ENCODE measurements at regions of chr6 and their contacts with region 1.

Region 1: GRCh38 chr6:160013987-160014868 is 45.3 kb downstream of the IGF2R start:
- DNase-seq: peak; percentile 16
- ATAC-seq: peak; percentile 86
- H3K4me3 ChIP-seq: no peak overlapping the region
- H3K27ac ChIP-seq: no peak overlapping the region
- H3K4me1 ChIP-seq: peaks cover 19% of the 10 kb centered on the region
- H3K27me3 ChIP-seq: no peaks in the 10 kb centered on the region
- CTCF ChIP-seq: no peak
- EP300 ChIP-seq: no peak
- POLR2A ChIP-seq: no peak
- RAD21 ChIP-seq: no peak

Region 2: GRCh38 chr6:160002882-160003281 is 11.3 kb before region 1 on chr6:
- CTCF ChIA-PET with region 1: no interaction called
- POLR2A ChIA-PET with region 1: no interaction called
- in situ Hi-C with region 1: no loop called
- intact Hi-C with region 1: loop called (anchors 2 kb)
- DNase-seq: no peak
- ATAC-seq: no peak
- H3K4me3 ChIP-seq: no peak overlapping the region
- H3K27ac ChIP-seq: no peak overlapping the region
- H3K4me1 ChIP-seq: peaks cover 22% of the 10 kb centered on the region
- H3K27me3 ChIP-seq: no peaks in the 10 kb centered on the region
- CTCF ChIP-seq: no peak
- EP300 ChIP-seq: no peak
- POLR2A ChIP-seq: no peak
- RAD21 ChIP-seq: no peak

Region 3: DNA sequence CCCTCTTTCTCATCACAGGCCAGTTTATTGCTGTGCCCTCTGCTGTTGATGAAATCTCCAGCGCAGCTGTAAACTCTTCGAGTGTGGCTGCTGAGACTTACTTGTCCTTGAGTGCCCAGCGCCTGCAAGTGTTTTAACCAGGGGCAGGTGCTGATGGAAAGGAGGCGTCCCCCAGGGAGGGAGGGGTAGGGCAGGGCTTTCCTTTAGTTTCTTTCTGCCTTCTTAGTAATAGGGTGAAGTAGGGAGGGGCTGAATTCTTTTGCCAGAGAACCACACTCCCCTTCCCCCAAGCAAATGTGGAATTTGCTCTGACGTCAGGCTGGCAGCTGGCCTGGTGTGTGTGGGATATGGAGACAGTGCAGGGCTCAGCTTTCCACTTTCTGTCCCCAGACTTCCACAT is 15.9 kb after region 1 on chr6:
- CTCF ChIA-PET with region 1: no interaction called
- POLR2A ChIA-PET with region 1: no interaction called
- in situ Hi-C with region 1: no loop called
- intact Hi-C with region 1: no loop called
- DNase-seq: no peak
- ATAC-seq: peak; percentile 24; the same call in 1 of the 3 replicates
- H3K4me3 ChIP-seq: no peak overlapping the region
- H3K27ac ChIP-seq: no peak overlapping the region
- H3K4me1 ChIP-seq: no peaks in the 10 kb centered on the region
- H3K27me3 ChIP-seq: no peaks in the 10 kb centered on the region
- CTCF ChIP-seq: no peak
- EP300 ChIP-seq: no peak
- POLR2A ChIP-seq: no peak
- RAD21 ChIP-seq: no peak

Region 4: GRCh38 chr6:160137989-160138835 is 124.0 kb after region 1 on chr6:
- CTCF ChIA-PET with region 1: no interaction called
- POLR2A ChIA-PET with region 1: no interaction called
- in situ Hi-C with region 1: no loop called
- intact Hi-C with region 1: no loop called
- DNase-seq: peak; percentile 57
- ATAC-seq: peak; percentile 9
- H3K4me3 ChIP-seq: peak overlapping the region in 1 of 3 experiments; percentile 40; a peak in 1 of 6 replicates
- H3K27ac ChIP-seq: peak overlapping the region; percentile 60
- H3K4me1 ChIP-seq: peaks cover 66% of the 10 kb centered on the region
- H3K27me3 ChIP-seq: no peaks in the 10 kb centered on the region
- CTCF ChIP-seq: peak; percentile 82
- EP300 ChIP-seq: no peak
- POLR2A ChIP-seq: no peak
- RAD21 ChIP-seq: peak; percentile 68

Measured in HepG2 (cell line).